Heart left ventricle (tissue), 16 donors: ENCODE measurements at regions of chr2 and their contacts with region 1.

Region 1: GRCh38 chr2:105454801-105455485 is 56.1 kb upstream of the FHL2 start:
- DNase-seq: no peak
- ATAC-seq: peak in 3 of 4 donors; percentile 22 to 59 (median 35)
- H3K4me3 ChIP-seq: no peak overlapping the region
- H3K27ac ChIP-seq: peak overlapping the region in 2 of 12 donors; percentile 8 to 57
- H3K4me1 ChIP-seq: peaks cover 0 to 21% (median 0%) of the 10 kb centered on the region in 12 donors
- H3K27me3 ChIP-seq: no peaks in the 10 kb centered on the region
- CTCF ChIP-seq: peak in 4 of 12 donors; percentile 13 to 46 (median 27)
- POLR2A ChIP-seq: no peak

Region 2: DNA sequence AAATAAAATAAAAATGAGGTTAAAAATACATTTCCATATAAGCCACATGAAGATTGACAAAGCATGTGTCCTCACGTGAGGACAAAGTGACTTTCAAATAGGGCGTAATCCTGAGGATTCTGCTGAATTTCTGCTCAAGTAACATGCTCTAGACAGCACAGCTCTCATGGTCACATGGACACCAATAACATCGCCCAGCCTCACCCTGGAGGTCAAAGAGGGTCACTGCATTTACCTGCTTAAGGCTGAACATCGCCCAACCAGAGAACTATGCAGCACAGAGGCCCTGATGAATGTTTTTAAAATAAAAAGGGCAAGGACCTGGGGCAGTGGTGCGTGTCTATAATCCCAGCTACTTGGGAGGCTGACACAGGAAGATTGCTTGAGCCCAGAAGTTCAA is 155.6 kb before region 1 on chr2:
- intact Hi-C with region 1: no loop called
- DNase-seq: no peak
- ATAC-seq: no peak
- H3K4me3 ChIP-seq: no peak overlapping the region
- H3K27ac ChIP-seq: no peak overlapping the region
- H3K4me1 ChIP-seq: peaks cover 0 to 6% (median 0%) of the 10 kb centered on the region in 12 donors
- H3K27me3 ChIP-seq: no peaks in the 10 kb centered on the region
- CTCF ChIP-seq: peak in 1 of 12 donors; percentile 9
- POLR2A ChIP-seq: no peak

Region 3: DNA sequence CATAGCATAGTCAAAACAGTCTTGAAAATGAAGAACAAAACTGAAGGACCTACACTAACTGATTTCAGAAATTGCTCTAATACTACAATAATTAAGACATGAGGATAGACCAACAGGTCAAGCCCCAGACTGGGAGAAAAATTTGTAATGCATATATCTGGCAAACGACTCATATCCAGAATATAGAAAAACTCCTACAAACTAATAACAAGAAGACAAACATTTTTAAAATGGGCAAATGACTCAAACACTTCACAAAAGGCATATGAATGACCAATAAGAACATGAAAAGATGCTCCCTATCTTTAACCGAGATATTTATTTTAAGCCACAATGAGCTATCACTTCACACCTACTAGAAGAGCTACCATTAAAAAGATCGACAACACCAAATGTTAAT is 139.6 kb before region 1 on chr2:
- intact Hi-C with region 1: no loop called
- DNase-seq: no peak
- ATAC-seq: no peak
- H3K4me3 ChIP-seq: no peak overlapping the region
- H3K27ac ChIP-seq: no peak overlapping the region
- H3K4me1 ChIP-seq: peaks cover 0 to 10% (median 0%) of the 10 kb centered on the region in 12 donors
- H3K27me3 ChIP-seq: no peaks in the 10 kb centered on the region
- CTCF ChIP-seq: no peak
- POLR2A ChIP-seq: no peak

Region 4: GRCh38 chr2:105409717-105410116 is 45.2 kb before region 1 on chr2:
- intact Hi-C with region 1: loop called in 1 of 10 experiments (anchors 5 kb)
- DNase-seq: peak; percentile 79 to 87 (median 84)
- ATAC-seq: peak; percentile 33 to 79 (median 62)
- H3K4me3 ChIP-seq: no peak overlapping the region
- H3K27ac ChIP-seq: peak overlapping the region in 11 of 12 donors; percentile 46 to 81 (median 60)
- H3K4me1 ChIP-seq: peaks cover 4 to 93% (median 38%) of the 10 kb centered on the region in 12 donors
- H3K27me3 ChIP-seq: no peaks in the 10 kb centered on the region
- CTCF ChIP-seq: no peak
- POLR2A ChIP-seq: peak in 1 of 2 donors; percentile 28

Region 5: DNA sequence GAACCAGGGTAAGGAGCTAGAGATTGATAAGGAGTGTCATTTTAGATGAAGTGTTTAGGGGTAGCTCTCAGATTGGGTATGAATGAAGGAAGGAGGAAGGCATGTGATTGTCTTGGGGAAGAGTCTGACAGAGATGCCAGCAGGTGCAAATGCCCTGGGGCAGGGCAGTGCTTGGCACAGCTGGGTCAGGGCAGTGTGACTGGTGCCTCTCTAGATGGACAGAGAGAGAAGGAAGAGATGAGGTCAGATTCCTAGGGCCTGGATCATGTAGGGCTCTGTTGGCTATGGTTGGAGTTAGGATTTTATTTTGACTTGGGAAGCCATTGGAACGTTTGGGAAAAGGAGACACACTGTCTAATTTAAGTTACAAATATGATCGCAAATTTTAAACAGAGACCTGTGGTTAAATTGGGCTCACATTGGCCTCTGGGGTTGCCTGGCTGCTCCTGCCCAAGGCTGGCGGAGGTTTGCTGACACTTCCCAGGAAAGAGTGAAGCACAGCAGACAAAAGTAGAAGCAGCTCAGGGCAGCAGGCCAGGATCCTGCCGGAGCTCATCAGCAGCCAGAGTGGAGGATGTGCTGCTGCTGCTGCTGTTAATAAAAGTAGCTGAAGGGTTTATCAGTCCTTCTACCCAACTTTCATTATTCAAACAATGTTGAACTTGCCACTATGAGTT is 23.4 kb before region 1 on chr2:
- intact Hi-C with region 1: loop called in 1 of 10 experiments (anchors 2 kb)
- DNase-seq: peak; percentile 63 to 83 (median 81)
- ATAC-seq: peak; percentile 3 to 63 (median 40)
- H3K4me3 ChIP-seq: peak overlapping the region in 9 of 12 donors; percentile 2 to 67 (median 56)
- H3K27ac ChIP-seq: peak overlapping the region; percentile 60 to 97 (median 85)
- H3K4me1 ChIP-seq: peaks cover 0 to 64% (median 17%) of the 10 kb centered on the region in 12 donors
- H3K27me3 ChIP-seq: no peaks in the 10 kb centered on the region
- CTCF ChIP-seq: no peak
- POLR2A ChIP-seq: peak in 1 of 2 donors; percentile 24